IMR-90 (cell line): ENCODE measurements at regions of chr12 and their contacts with region 1.

Region 1: DNA sequence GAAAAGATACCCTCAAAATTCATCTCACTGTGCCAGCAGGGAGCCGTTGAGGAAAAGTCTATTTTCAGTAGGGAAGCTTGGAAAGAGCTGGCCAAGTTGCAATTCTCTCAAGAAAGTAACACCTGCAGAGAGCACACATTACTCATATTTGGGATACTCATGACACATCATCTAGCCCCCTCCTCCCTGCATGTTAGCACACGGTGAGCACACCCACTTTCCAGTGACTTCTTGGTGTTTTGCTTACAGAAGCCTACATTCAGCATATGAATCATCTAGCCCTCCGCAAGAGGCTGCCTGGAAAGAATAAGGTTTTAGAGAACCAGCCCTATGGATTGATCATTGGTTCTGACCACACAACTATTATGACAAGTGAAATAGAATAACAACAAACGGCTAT is 124.5 kb downstream of the PTPRO start:
- DNase-seq: no peak
- ATAC-seq: no peak
- H3K4me3 ChIP-seq: no peak overlapping the region
- H3K27ac ChIP-seq: no peak overlapping the region
- H3K4me1 ChIP-seq: no peaks in the 10 kb centered on the region
- H3K27me3 ChIP-seq: no peaks in the 10 kb centered on the region
- CTCF ChIP-seq: no peak
- POLR2A ChIP-seq: no peak
- RAD21 ChIP-seq: no peak

Region 2: GRCh38 chr12:15458008-15458407 is 11.2 kb after region 1 on chr12:
- CTCF ChIA-PET with region 1: no interaction called
- POLR2A ChIA-PET with region 1: no interaction called
- dilution Hi-C with region 1: no loop called
- in situ Hi-C with region 1: no loop called
- intact Hi-C with region 1: loop called (anchors 2 kb)
- DNase-seq: no peak
- ATAC-seq: no peak
- H3K4me3 ChIP-seq: no peak overlapping the region
- H3K27ac ChIP-seq: no peak overlapping the region
- H3K4me1 ChIP-seq: no peaks in the 10 kb centered on the region
- H3K27me3 ChIP-seq: no peaks in the 10 kb centered on the region
- CTCF ChIP-seq: no peak
- POLR2A ChIP-seq: no peak
- RAD21 ChIP-seq: no peak